GM18951 (cell line): ENCODE measurements at regions of chr19 and their contacts with region 1.

Region 1: GRCh38 chr19:48989691-48990291 is 3.3 kb downstream of the GYS1 start:
- POLR2A ChIP-seq: no peak

Region 2: DNA sequence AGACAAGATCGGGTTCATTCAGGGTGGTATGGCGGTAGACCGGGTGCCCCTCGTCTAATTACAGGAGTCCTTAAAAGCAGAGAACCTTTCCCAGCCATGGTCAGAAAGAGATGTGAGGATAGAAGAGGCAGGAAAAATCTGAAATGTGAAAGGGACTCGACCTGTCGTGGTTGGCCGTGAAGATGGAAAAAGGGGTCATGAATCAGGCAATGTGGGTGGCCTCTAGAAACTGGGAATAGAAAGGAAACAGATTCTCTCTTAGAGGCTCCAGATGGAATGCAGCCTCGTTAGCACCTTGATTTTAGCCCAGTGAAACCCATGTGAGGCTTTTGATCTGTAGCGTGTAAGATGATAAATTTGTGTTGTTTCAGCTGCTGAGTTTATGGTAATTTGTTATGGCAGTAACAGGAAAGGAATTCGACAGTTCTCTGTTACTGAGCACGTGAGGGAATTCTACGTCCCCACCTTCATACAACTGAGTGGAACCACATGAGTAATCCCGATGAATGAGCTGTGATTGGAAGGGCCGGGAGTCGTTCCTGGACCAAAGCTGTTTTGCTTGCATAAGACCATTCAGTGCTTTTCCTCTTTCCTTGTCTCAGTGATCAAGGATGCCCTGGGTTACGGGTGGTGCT is 332.8 kb before region 1 on chr19:
- in situ Hi-C with region 1: loop called (anchors 10 kb)
- POLR2A ChIP-seq: no peak